ENCODE measurements at regions of chr11 and their contacts with region 1.

Region 1: DNA sequence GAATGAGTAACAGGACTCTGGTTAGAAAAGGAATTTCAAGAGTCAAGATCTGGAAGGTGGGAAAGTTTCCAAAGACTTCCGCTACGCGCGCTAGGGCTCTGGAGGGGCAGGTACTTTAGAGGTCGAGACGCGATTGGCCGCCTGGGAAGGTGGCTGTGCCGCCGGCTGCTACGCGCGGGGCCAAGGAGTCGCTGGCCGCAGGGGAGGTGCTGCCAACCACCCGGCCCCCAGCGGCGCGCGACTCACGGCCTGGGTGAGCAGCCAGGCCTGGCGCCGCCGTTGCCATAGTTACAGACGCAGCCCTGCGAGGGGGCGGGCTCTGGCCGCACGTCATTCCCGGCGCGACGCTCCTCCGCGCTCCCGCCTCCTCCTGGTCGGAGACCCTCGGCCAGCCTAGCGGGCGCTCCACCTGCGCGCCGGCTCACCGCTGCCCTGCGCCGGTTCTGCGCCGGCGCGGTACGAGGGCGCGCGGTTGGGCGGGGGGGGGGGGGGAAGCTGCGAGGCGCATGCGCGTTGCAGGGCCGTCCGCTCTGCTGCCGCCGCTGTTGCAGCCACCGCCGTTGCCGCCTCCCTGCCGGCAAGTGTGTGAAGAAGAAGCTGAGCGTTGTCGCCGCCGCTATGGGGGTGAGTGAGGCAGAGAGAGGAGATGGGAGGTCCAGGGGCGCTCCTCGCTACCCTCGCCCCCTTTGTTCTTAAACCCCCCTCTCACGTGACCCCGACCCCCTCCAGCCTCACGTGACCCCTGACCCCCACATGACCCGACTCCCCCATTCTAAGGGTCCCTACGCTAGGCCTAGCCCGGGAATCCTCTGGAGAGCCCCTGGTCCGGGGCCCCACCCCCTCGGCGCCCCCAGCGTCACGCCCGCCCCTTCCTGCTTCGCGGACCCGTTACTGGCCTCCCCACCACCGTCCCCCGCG is at the start of gene NAA40:
- DNase-seq: peak; percentile 95
- ATAC-seq: peak; percentile 93
- total RNA-seq, gene NAA40: 18.7 TPM

Region 2: DNA sequence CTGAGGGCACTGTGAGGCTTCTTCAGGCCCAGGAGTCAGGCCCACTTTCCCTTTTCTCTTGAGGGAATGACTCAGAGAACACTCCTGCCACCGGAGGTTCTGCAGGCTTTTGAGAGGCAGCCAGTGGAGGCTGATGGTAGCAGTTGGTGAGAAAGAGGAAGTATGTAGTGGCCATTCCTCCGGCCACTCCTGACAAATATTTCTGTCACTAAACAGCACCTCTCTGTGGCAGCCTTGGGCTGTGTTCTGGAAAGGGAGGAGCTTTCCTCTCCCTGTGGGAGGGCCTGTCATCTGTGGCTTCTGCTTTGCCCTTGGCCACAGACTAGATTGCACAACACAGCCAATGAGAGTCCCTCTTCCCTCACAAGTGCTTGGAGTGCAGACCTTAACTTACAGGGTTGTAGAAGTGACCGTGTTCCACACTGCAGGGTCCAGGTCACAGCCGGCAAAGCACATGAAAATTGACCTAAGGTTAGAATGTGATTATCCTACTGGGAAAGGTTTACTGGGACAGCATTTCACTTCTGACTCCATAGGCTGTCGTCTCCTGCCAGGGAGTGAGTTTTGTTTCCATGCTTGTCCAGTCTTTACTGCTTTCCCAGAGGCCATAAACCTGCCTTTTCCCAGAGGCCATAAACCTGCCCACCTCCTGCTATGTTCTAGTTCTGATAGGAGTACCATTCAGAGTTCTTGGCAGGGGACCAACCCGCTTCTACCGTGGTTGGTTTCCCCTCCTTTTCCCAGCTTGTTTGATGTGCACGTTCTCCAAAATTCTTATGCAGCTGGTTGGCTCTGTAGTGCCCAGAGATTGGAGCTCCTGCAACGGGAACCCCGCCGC is 66.6 kb before region 1 on chr11:
- intact Hi-C with region 1: loop called (anchors 2 kb)
- DNase-seq: peak; percentile 84
- ATAC-seq: peak; percentile 96

Region 3: DNA sequence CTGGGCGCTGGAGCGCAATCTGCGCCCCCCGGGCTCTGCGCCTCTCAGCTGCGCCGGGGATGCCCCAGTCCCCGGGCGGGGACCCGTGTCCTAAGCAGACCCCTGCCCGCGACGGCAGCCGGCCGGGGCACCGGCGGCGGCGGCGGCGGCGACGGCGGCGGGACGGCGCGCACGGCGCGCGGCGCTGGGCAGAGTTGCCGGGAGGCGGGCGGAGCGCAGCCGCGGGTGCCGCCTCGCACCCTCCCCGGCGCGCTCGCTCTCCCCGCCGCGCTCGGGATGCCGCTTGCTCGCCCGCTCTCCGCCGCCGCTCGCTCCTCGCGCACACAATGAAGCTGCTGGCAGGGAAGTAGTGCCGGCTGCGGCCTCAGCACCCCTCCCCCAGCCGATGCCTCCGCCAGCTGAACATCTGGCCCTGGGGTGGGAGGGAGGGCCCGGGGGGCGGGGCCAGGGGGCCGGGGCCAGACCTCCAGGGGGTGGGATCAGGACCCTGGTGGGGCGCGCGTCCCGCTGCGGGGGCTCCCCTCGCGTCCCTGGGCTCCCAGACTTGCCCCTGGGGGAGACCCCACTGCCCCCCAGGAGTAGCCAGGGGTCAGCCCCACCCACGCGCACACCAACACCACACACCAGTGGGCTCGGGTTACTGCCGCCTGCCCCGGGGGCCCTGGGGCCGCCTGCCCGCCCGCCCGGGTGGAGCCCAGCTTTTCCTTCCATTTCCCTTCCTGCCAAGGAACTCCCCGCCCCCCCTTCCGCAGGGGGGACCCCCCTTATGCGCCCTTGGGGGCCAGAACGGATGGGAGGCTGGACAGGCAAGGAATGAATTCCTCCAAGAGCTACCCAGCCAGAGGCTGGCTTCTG is 21.7 kb before region 1 on chr11 and contains the start of gene RCOR2:
- intact Hi-C with region 1: loop called (anchors 1 kb)
- DNase-seq: peak; percentile 91
- ATAC-seq: peak; percentile 51
- total RNA-seq, gene RCOR2: 11.1 TPM

Region 4: GRCh38 chr11:64000026-64000739 is 61.4 kb after region 1 on chr11:
- intact Hi-C with region 1: no loop called
- DNase-seq: peak; percentile 86
- ATAC-seq: peak; percentile 90

Region 5: DNA sequence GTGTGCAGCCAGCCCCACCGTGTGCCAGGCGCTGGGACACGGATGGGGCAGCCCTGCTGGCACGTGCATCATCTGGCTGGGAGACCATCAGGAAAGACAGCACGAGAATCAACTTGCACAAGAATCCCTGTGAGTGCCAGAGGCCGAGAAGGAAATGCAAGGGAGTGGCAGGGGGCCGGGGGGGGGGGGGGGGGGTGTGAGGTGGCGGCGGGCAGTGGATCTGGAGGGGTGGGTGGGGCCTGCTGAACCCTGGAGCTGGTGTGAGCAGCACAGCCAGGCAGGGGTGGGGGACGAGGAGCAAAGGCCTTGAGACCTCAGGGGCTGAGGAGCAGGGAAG is 83.0 kb after region 1 on chr11:
- intact Hi-C with region 1: no loop called
- DNase-seq: no peak
- ATAC-seq: no peak

Region 6: DNA sequence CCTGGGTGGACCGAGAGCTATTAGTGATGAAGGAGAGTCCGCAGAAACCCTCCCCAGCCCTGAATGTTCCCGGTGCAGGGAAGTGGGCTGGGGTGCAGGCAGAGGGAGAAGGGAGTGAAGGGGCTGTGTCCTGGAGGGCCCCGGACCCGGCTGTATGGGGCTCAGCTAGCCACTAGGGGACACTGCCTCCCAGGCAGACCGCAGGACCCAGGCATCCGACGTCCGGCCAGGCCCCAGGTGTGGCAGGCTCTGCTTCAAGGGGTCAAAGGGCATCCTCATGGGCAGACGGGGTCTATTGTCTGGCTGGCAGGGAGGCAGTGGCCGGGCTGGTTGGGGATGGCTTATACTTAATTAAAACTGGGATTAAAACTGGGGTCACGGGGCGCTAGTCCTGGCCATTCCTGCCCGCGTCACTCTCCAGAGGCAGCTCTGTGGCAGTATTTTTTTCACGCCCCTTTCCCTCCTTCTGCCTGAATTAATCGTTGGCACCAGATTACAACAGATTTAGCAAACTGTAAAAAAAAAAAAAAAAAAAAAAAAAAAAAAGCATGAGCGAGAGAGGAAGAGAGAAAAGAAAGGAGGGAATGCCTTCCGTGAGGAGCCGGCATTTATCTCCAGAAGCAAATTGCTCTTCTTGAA is 102.1 kb after region 1 on chr11:
- intact Hi-C with region 1: no loop called
- DNase-seq: no peak
- ATAC-seq: no peak